Activated CD8-positive, alpha-beta T cell treated with anti-CD3 and anti-CD28 coated beads, Interleukin-2, amount 10 ng/mL, durations not matched to agents 7 days and 5 days (primary cell): ENCODE measurements at regions of chr9 and their contacts with region 1.

Region 1: DNA sequence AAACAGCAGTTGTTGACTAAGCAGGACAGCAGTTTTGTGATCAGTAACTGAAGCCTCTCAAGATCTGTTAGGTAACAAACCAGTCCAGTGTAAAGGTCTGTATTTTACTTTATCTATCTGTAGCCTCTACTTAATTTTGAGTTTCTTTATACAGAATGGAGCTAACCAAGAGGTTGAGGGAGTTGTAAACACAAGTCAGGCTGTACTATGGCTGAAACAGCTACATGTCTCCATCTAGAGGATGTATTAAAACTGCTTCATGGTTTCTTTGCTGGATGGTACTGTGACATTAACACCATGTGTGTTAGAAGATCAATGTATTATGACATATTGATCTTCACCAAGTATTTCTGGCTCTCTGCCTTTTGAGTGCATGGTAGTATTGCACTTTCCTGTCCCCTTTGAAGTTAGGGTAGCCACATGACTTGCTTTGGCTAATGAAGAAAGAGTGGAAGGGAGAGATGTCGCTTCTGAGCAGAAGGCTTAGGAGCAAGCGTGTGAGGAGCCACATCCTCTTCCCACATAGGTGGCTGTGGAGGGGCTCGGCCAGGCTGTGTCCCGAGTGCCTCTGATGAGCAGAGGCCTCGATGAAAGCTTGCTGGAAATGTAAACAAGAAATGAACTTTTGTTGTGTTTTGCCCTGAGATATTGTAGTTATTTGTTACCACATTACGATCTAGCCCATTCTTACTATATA is 105.6 kb upstream of the PCA3 start:
- DNase-seq: no peak
- ATAC-seq: peak; percentile 95
- H3K4me3 Mint-ChIP-seq: no peak overlapping the region
- H3K27ac Mint-ChIP-seq: no peak overlapping the region
- H3K4me1 Mint-ChIP-seq: peaks cover 52% of the 10 kb centered on the region
- H3K27me3 Mint-ChIP-seq: peaks cover 9% of the 10 kb centered on the region

Region 2: GRCh38 chr9:76441551-76442322 is 216.9 kb before region 1 on chr9:
- CTCF ChIA-PET with region 1: interaction called, 89 read pairs
- POLR2A ChIA-PET with region 1: no interaction called
- DNase-seq: peak; percentile 29
- ATAC-seq: peak; percentile 64
- H3K4me3 Mint-ChIP-seq: peak overlapping the region; percentile 22
- H3K27ac Mint-ChIP-seq: peak overlapping the region; percentile 47
- H3K4me1 Mint-ChIP-seq: peaks cover 50% of the 10 kb centered on the region
- H3K27me3 Mint-ChIP-seq: no peaks in the 10 kb centered on the region

Region 3: GRCh38 chr9:76458903-76459690 is 199.6 kb before region 1 on chr9 and contains the start of gene GCNT1:
- CTCF ChIA-PET with region 1: interaction called, 71 read pairs
- POLR2A ChIA-PET with region 1: interaction called, 6 read pairs
- DNase-seq: peak; percentile 94
- ATAC-seq: peak; percentile 97
- H3K4me3 Mint-ChIP-seq: peak within 1 kb of the TSS; percentile 96
- H3K27ac Mint-ChIP-seq: peak within 1 kb of the TSS; percentile 88
- H3K4me1 Mint-ChIP-seq: peaks cover 30% of the 10 kb centered on the region
- H3K27me3 Mint-ChIP-seq: no peaks in the 10 kb centered on the region
- total RNA-seq, gene GCNT1: 7.7 to 8.0 TPM

Region 4: DNA sequence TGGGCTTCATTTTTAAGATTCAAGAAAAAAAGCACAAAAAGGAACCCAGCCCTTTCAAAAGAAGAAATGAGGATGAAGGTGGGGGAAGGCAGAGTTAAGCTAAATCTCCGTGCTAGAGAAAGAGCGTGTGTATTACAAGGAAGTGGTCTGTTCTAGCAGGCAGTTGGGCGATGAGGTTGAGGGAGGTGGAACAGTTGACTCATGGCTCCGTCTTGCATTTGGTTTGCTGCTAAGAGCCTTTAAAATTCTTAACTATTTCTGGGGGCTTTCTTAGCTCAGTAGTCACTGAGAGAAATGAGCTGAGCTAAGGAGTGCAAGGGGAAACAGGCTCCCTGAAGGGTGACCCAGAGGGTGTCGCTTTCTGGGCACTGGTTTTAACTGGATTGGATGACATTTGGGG is 82.3 kb before region 1 on chr9:
- CTCF ChIA-PET with region 1: interaction called, 21 read pairs
- POLR2A ChIA-PET with region 1: no interaction called
- DNase-seq: peak; percentile 92
- ATAC-seq: peak; percentile 92
- H3K4me3 Mint-ChIP-seq: peak overlapping the region; percentile 51
- H3K27ac Mint-ChIP-seq: peak overlapping the region; percentile 93
- H3K4me1 Mint-ChIP-seq: peaks cover 47% of the 10 kb centered on the region
- H3K27me3 Mint-ChIP-seq: peaks cover 2% of the 10 kb centered on the region

Region 5: DNA sequence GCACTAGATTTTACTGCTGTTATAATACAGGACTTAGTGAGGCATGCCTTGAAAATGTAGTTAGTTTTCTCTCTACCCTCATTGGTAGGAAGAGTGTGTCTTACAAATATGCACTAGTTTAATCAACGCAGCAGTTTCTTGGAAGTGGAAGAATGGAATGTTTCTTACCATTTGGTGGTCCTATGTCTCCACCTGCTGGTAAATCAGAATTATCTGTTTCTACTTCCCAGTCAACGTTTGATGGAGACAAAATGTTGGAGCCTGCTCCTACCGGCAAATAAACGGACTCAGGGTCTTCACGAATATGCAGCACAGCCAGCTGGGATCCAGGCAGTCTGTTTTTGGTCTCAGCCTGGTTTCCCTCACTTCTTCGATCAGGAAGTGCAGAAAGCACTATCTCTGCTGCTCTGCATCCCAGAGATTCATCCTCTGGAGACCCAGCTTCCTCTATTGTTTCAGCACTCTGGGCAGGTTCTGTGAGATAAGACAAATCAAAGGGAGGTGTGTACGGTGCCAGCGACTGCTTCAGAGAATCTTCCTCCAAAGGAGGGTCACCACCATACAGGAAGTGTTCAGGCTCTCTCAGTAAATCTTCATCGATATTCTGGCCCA is 46.0 kb after region 1 on chr9:
- CTCF ChIA-PET with region 1: interaction called, 20 read pairs
- POLR2A ChIA-PET with region 1: no interaction called
- DNase-seq: no peak
- ATAC-seq: peak; percentile 39
- H3K4me3 Mint-ChIP-seq: no peak overlapping the region
- H3K27ac Mint-ChIP-seq: no peak overlapping the region
- H3K4me1 Mint-ChIP-seq: peaks cover 7% of the 10 kb centered on the region
- H3K27me3 Mint-ChIP-seq: peaks cover 25% of the 10 kb centered on the region

Region 6: GRCh38 chr9:76827286-76828080 is 168.8 kb after region 1 on chr9:
- CTCF ChIA-PET with region 1: no interaction called
- POLR2A ChIA-PET with region 1: no interaction called
- DNase-seq: no peak
- ATAC-seq: no peak
- H3K4me3 Mint-ChIP-seq: no peak overlapping the region
- H3K27ac Mint-ChIP-seq: no peak overlapping the region
- H3K4me1 Mint-ChIP-seq: no peaks in the 10 kb centered on the region
- H3K27me3 Mint-ChIP-seq: peaks cover 4% of the 10 kb centered on the region